ENCODE measurements at regions of chr3 and their contacts with region 1.

Region 1: GRCh38 chr3:27681245-27681748 is 40.8 kb downstream of the EOMES start:
- DNase-seq: peak in 1 of 2 experiments; percentile 52
- H3K4me3 ChIP-seq: no peak overlapping the region
- H3K4me3 Mint-ChIP-seq: peak overlapping the region; percentile 68
- H3K27ac Mint-ChIP-seq: peak overlapping the region; percentile 79
- H3K4me1 ChIP-seq: peaks cover 4% of the 10 kb centered on the region
- H3K4me1 Mint-ChIP-seq: no peaks in the 10 kb centered on the region
- H3K27me3 ChIP-seq: no peaks in the 10 kb centered on the region
- H3K27me3 Mint-ChIP-seq: no peaks in the 10 kb centered on the region
- CTCF ChIP-seq: peak; percentile 70 to 72

Region 2: DNA sequence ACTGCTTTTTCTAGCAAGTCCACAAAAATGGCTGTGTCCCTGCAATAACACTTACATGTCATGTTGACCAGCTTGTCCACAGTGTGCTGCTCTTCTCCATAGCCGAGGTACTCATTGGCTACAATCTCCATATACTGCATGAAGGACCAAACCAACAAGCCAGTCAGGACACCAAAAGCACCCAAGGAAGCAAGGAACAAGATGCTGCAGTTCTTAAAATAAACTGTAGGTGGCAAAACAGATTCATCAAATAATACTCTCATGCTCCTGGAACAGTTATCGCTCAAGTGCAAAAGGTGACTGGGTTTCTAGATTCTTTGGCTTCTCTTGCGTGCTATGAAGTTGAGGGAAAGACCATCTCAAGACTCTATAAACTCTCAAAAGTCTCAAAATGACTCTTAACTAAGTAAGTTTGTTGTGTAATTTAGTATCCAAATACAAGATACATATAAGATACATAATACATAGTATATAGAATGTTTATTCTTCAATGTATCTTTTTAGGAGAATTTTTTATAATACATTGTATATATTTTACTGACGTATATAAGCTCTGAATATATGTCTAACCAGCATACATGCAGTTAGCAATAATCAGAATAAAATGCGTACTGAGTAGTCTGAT is 369.1 kb before region 1 on chr3:
- CTCF ChIA-PET with region 1: no interaction called
- POLR2A ChIA-PET with region 1: no interaction called
- intact Hi-C with region 1: loop called (anchors 1 kb)
- DNase-seq: peak in 1 of 2 experiments; percentile 59
- H3K4me3 ChIP-seq: no peak overlapping the region
- H3K4me3 Mint-ChIP-seq: no peak overlapping the region
- H3K27ac Mint-ChIP-seq: no peak overlapping the region
- H3K4me1 ChIP-seq: peaks cover 3% of the 10 kb centered on the region; the same call in 1 of the 2 replicates
- H3K4me1 Mint-ChIP-seq: peaks cover 8% of the 10 kb centered on the region
- H3K27me3 ChIP-seq: no peaks in the 10 kb centered on the region
- H3K27me3 Mint-ChIP-seq: peaks cover 2% of the 10 kb centered on the region
- CTCF ChIP-seq: peak; percentile 45 to 64

Region 3: DNA sequence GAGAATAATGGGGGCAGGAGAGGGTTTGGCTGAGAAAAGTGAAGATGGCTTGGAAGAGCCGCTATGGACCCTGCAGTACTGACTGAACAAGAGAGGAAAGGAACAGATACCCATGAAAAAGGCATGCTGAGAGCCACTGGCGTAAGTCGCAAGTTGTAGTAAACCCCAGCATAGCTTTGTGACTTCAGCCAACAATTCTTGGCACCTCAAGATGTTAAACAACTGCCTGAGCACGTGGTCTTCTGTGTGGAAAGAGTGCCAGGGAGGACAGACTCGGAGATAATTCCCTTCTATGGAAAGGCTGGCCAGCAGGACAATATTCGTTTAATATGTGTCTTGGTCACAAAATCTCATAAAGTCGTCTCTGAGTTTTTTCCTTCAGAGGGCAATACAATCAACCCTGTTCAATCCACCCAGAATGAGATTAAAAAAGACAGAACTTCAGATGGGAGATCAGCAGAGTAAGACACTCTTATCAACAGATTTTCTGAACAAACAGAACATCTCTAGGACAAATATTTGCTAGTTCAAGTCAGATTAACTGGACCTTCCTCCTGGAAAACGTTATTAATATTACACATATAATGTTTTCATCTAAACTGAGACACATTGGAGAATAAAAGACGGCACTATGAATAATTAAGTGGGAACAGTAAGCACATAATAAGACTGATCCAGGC is 361.3 kb before region 1 on chr3:
- CTCF ChIA-PET with region 1: no interaction called
- POLR2A ChIA-PET with region 1: no interaction called
- intact Hi-C with region 1: loop called (anchors 1 kb)
- DNase-seq: no peak
- H3K4me3 ChIP-seq: no peak overlapping the region
- H3K4me3 Mint-ChIP-seq: no peak overlapping the region
- H3K27ac Mint-ChIP-seq: no peak overlapping the region
- H3K4me1 ChIP-seq: peaks cover 3% of the 10 kb centered on the region; the same call in 1 of the 2 replicates
- H3K4me1 Mint-ChIP-seq: peaks cover 8% of the 10 kb centered on the region
- H3K27me3 ChIP-seq: no peaks in the 10 kb centered on the region
- H3K27me3 Mint-ChIP-seq: no peaks in the 10 kb centered on the region
- CTCF ChIP-seq: no peak

Region 4: DNA sequence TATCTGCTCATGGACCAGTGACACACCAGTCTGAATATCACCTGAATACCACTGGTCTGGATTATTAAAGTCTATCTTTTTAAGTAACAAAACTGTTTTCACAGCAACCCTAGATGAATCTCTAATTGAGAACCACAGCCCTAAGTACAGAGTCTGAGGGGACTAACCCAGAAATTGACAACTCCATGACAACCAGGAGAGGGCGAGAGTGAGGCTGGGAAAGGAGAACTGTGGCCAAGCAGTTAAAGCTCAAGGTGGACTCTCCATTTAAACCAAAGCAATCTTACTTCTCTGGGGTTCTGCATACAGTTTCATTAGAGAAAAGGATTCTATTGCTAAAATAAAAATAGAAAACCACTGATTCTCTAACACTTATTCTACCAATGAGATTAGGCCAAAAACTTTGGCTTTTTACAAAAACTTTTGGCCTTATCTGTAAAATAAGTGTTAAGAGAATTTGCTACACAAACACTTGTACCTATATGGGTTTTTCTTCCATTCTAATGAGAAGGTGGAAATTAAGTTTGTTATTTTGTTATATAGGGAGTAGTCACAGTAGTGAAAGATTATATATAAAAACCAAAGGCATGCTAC is 323.5 kb before region 1 on chr3:
- CTCF ChIA-PET with region 1: interaction called, 6 read pairs
- POLR2A ChIA-PET with region 1: no interaction called
- intact Hi-C with region 1: loop called (anchors 1 kb)
- DNase-seq: peak; percentile 49 to 64
- H3K4me3 ChIP-seq: no peak overlapping the region
- H3K4me3 Mint-ChIP-seq: no peak overlapping the region
- H3K27ac Mint-ChIP-seq: no peak overlapping the region
- H3K4me1 ChIP-seq: no peaks in the 10 kb centered on the region
- H3K4me1 Mint-ChIP-seq: no peaks in the 10 kb centered on the region
- H3K27me3 ChIP-seq: no peaks in the 10 kb centered on the region
- H3K27me3 Mint-ChIP-seq: peaks cover 10% of the 10 kb centered on the region
- CTCF ChIP-seq: peak in 1 of 2 experiments; percentile 73

Region 5: GRCh38 chr3:27467545-27467944 is 213.8 kb before region 1 on chr3:
- CTCF ChIA-PET with region 1: interaction called, 5 read pairs
- POLR2A ChIA-PET with region 1: no interaction called
- intact Hi-C with region 1: loop called (anchors 5 kb)
- DNase-seq: peak in 1 of 2 experiments; percentile 6
- H3K4me3 ChIP-seq: no peak overlapping the region
- H3K4me3 Mint-ChIP-seq: no peak overlapping the region
- H3K27ac Mint-ChIP-seq: no peak overlapping the region
- H3K4me1 ChIP-seq: no peaks in the 10 kb centered on the region
- H3K4me1 Mint-ChIP-seq: no peaks in the 10 kb centered on the region
- H3K27me3 ChIP-seq: no peaks in the 10 kb centered on the region
- H3K27me3 Mint-ChIP-seq: no peaks in the 10 kb centered on the region
- CTCF ChIP-seq: peak; percentile 36 to 49

Region 6: DNA sequence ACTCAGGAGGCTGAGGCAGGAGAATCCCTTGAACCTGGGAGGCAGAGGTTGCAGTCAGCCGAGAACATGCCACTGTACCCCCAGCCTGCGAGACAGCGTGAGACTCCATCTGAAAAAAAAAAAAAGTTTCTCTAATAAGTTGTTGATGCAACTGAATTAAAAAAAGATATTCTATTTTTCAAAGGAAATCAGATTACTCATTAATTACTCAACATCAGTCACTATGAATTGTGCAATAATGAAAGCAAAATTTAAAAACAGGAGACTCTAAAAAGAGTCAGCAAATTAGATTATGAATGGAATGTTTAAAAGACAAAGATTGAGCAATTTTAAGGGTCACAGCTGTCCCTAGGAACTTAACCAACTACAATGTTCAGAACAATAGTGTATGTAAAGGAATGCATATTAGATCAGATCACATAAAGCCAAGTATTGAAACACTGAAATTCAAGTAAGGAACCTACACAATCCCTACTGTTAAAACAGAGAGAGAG is 136.9 kb before region 1 on chr3:
- CTCF ChIA-PET with region 1: no interaction called
- POLR2A ChIA-PET with region 1: no interaction called
- intact Hi-C with region 1: no loop called
- DNase-seq: no peak
- H3K4me3 ChIP-seq: no peak overlapping the region
- H3K4me3 Mint-ChIP-seq: no peak overlapping the region
- H3K27ac Mint-ChIP-seq: no peak overlapping the region
- H3K4me1 ChIP-seq: no peaks in the 10 kb centered on the region; the same call in 1 of the 2 replicates
- H3K4me1 Mint-ChIP-seq: peaks cover 7% of the 10 kb centered on the region
- H3K27me3 ChIP-seq: no peaks in the 10 kb centered on the region
- H3K27me3 Mint-ChIP-seq: no peaks in the 10 kb centered on the region
- CTCF ChIP-seq: no peak

Region 7: GRCh38 chr3:27643355-27643754 is 37.9 kb before region 1 on chr3:
- CTCF ChIA-PET with region 1: no interaction called
- POLR2A ChIA-PET with region 1: no interaction called
- intact Hi-C with region 1: loop called (anchors 1 kb)
- DNase-seq: no peak
- H3K4me3 ChIP-seq: no peak overlapping the region
- H3K4me3 Mint-ChIP-seq: no peak overlapping the region
- H3K27ac Mint-ChIP-seq: no peak overlapping the region
- H3K4me1 ChIP-seq: peaks cover 17% of the 10 kb centered on the region
- H3K4me1 Mint-ChIP-seq: no peaks in the 10 kb centered on the region
- H3K27me3 ChIP-seq: no peaks in the 10 kb centered on the region
- H3K27me3 Mint-ChIP-seq: no peaks in the 10 kb centered on the region
- CTCF ChIP-seq: no peak